Esophagus muscularis mucosa (tissue), 4 donors: ENCODE measurements at regions of chr11 and their contacts with region 1.

Region 1: GRCh38 chr11:60831143-60831500 is 10.8 kb upstream of the CCDC86 start:
- DNase-seq: peak; percentile 96
- H3K4me3 ChIP-seq: no peak overlapping the region
- H3K27ac ChIP-seq: no peak overlapping the region
- H3K4me1 ChIP-seq: peaks cover 0 to 3% (median 0%) of the 10 kb centered on the region in 4 donors
- H3K27me3 ChIP-seq: peaks cover 0 to 7% (median 0%) of the 10 kb centered on the region in 4 donors
- CTCF ChIP-seq: peak; percentile 87 to 95 (median 93)
- EP300 ChIP-seq: no peak
- POLR2A ChIP-seq: no peak

Region 2: DNA sequence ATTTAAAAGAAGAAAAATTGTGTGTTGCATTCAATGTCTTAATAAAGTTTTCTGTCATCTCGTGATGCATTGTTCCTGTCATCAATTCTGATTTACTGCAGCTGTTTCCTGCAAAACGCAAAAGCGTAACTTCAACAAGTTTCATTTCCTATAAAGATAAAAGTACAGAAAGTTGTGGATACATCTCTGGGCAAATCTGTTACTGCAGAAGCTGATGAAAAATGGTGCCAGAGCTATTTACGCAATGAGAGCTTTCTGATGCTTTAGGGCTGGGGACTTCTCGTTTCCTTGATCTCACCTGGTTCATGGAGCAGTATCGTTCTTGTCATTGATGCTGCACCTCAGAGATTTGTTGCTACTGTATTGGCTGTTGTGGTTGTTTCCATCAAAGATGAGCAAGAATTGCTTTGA is 354.1 kb before region 1 on chr11:
- intact Hi-C with region 1: no loop called
- DNase-seq: no peak
- H3K4me3 ChIP-seq: no peak overlapping the region
- H3K27ac ChIP-seq: no peak overlapping the region
- H3K4me1 ChIP-seq: no peaks in the 10 kb centered on the region
- H3K27me3 ChIP-seq: no peaks in the 10 kb centered on the region
- CTCF ChIP-seq: no peak
- EP300 ChIP-seq: no peak
- POLR2A ChIP-seq: no peak

Region 3: DNA sequence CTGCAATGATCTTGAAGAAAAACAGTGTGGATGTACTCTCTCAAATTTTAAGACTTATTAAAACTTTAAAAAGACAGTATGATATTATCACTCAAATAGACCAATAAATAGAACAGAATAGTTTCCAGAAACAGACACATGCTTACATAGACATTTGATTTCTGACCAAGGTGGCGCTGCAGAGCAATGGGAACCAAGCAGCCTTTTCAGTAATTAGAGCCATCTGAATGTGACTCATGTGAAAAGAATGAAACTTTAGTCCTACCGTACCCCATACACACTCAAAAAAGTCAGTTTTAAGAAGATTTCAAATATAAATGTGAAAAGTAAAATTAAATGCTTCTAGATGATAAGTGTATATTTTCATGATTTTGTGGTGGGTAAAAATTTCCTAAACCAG is 205.9 kb before region 1 on chr11:
- intact Hi-C with region 1: no loop called
- DNase-seq: no peak
- H3K4me3 ChIP-seq: no peak overlapping the region
- H3K27ac ChIP-seq: no peak overlapping the region
- H3K4me1 ChIP-seq: no peaks in the 10 kb centered on the region
- H3K27me3 ChIP-seq: no peaks in the 10 kb centered on the region
- CTCF ChIP-seq: no peak
- EP300 ChIP-seq: no peak
- POLR2A ChIP-seq: no peak

Region 4: DNA sequence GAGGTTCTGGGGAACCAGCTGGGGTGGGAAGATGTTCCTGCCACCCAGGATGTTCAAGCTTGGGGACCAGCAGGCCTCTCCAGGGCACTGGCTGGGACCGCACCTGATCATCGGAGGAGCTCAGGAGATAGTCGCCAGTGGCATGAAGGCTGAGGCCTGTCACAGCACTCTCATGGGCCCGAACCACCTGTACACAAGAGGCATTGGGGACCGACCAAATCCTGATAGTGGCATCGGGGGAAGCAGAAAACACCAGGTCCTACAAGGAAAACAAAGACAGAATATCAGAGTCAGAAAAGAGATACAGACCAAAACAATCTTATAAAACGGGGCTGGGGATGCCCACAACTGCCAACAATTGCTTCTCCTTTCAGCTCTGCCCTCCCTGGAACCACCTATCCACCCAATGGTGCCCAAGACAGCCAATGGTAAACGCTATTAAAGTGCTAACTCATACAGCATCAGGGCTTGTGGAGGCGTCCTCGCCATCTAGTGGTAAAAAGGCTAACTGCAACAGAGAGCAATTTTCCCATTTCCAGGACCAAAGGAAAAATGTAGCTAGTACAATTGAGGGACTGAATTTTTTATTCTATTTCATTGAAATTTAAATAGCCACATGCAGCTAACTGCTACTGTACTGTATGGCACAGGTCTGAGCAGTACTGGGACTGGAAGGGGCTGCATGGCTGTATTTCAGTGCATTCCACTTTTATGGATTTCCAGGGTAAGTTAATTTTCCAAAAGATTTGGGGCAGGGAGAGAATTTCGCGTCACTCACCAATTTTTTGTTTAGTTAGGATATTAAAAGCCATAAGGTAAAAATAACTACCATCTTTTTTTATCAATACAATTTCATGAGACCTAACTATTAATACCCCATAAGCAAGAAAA is 68.2 kb after region 1 on chr11:
- intact Hi-C with region 1: loop called (anchors 5 kb)
- DNase-seq: no peak
- H3K4me3 ChIP-seq: no peak overlapping the region
- H3K27ac ChIP-seq: no peak overlapping the region
- H3K4me1 ChIP-seq: peaks cover 5 to 16% (median 8%) of the 10 kb centered on the region in 4 donors
- H3K27me3 ChIP-seq: no peaks in the 10 kb centered on the region
- CTCF ChIP-seq: peak in 2 of 3 experiments; percentile 86 to 91
- EP300 ChIP-seq: no peak
- POLR2A ChIP-seq: no peak

Region 5: DNA sequence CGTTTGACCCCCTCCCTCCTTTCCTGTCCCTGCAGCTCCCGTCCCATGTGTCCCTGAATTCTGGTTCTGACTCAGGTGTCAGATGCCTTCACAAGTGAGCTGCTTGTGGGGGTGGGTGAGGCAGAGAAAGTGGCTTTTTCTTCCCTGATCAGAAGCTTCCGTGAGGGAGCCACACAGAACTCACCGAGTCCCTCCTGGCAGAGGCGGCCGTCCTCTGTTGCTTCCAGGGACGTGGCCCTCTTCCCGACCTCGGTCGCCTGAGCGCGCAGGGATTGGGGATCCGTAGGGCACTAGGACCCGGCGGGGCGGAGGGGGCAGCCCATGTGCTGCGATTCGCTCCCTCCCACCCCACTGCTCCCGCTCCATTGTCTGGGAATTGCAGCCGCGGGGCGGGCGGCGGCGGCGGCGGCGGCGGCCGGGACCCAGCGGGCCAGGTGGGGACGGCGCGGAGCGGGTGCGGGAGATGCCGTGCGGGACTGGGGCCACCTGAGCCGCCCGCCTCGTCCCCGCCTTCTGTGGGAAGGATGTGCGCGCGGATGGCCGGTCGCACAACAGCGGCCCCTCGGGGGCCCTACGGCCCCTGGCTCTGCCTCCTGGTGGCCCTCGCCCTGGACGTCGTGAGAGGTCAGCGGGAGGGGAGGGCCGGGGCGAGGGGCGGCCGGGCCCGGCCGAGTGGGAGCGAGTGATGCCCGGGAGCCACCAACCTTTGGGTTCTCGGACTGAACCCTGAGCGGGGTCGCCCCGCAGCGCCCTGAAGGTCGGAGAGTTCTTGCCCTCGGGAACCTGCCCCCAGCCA is 93.2 kb after region 1 on chr11 and contains the start of gene TMEM132A:
- intact Hi-C with region 1: no loop called
- DNase-seq: no peak
- H3K4me3 ChIP-seq: peak within 1 kb of the TSS; percentile 60 to 74 (median 73)
- H3K27ac ChIP-seq: peak within 1 kb of the TSS in 1 of 4 donors; percentile 12
- H3K4me1 ChIP-seq: peaks cover 28 to 36% (median 31%) of the 10 kb centered on the region in 4 donors
- H3K27me3 ChIP-seq: peaks cover 0 to 35% (median 7%) of the 10 kb centered on the region in 4 donors
- CTCF ChIP-seq: peak in 1 of 3 experiments; percentile 9
- EP300 ChIP-seq: no peak
- POLR2A ChIP-seq: no peak
- total RNA-seq, gene TMEM132A: 2.9 to 9.3 (median 6.8) TPM

Region 6: GRCh38 chr11:61161190-61162091 is 330.3 kb after region 1 on chr11 and contains the start of gene VPS37C:
- intact Hi-C with region 1: loop called (anchors 10 kb)
- DNase-seq: peak; percentile 95
- H3K4me3 ChIP-seq: peak within 1 kb of the TSS; percentile 84 to 94 (median 89)
- H3K27ac ChIP-seq: peak within 1 kb of the TSS; percentile 93 to 97 (median 96)
- H3K4me1 ChIP-seq: peaks cover 30 to 49% (median 43%) of the 10 kb centered on the region in 4 donors
- H3K27me3 ChIP-seq: no peaks in the 10 kb centered on the region
- CTCF ChIP-seq: peak in 2 of 3 experiments; percentile 16 to 26
- EP300 ChIP-seq: no peak
- POLR2A ChIP-seq: no peak
- total RNA-seq, gene VPS37C: 29.1 to 43.5 (median 38.1) TPM

Region 7: DNA sequence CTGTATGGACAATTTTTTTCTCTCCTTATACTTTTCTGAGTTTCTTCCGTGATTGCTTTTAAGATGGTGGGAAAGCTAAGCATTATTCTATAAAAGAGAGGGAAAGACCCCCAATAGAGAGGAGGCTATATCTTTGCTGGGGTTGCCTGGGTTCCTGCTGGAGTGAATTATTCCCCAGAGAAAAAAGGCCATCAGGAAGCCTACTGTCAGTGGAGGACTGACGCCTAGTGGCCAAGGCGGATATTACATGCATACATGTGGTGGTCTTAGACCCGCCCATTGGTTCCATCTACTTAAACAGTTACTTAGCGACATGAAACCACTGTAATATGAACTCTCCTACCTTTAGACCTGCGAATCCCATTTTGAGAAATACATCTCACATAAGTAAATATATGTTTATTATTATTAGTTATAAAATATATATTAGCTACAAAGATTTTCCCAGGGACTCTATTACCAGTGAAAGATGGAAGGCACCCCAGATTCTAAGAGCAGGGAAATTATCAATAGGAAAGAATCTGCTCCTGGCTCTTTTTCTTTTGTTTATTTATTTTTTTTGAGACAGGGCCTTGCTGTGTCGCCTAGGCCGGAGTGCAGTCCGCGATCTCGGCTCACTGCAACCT is 356.5 kb after region 1 on chr11:
- intact Hi-C with region 1: loop called (anchors 5 kb)
- DNase-seq: peak; percentile 94
- H3K4me3 ChIP-seq: no peak overlapping the region
- H3K27ac ChIP-seq: no peak overlapping the region
- H3K4me1 ChIP-seq: no peaks in the 10 kb centered on the region
- H3K27me3 ChIP-seq: peaks cover 0 to 31% (median 0%) of the 10 kb centered on the region in 4 donors
- CTCF ChIP-seq: peak; percentile 88 to 94 (median 91)
- EP300 ChIP-seq: no peak
- POLR2A ChIP-seq: no peak